ENCODE measurements at regions of chr2 and their contacts with region 1.

Region 1: GRCh38 chr2:27890146-27890923 is at the starts of genes BABAM2 and RBKS:
- DNase-seq: peak; percentile 97
- H3K4me3 Mint-ChIP-seq: peak within 1 kb of the TSS; percentile 100
- H3K27ac Mint-ChIP-seq: peak within 1 kb of the TSS; percentile 100
- H3K4me1 Mint-ChIP-seq: peaks cover 57% of the 10 kb centered on the region
- H3K27me3 Mint-ChIP-seq: peaks cover 2% of the 10 kb centered on the region
- total RNA-seq, gene BABAM2: 45.9 and 46.7 TPM in 2 replicates
- total RNA-seq, gene RBKS: 1.3 and 1.4 TPM in 2 replicates

Region 2: DNA sequence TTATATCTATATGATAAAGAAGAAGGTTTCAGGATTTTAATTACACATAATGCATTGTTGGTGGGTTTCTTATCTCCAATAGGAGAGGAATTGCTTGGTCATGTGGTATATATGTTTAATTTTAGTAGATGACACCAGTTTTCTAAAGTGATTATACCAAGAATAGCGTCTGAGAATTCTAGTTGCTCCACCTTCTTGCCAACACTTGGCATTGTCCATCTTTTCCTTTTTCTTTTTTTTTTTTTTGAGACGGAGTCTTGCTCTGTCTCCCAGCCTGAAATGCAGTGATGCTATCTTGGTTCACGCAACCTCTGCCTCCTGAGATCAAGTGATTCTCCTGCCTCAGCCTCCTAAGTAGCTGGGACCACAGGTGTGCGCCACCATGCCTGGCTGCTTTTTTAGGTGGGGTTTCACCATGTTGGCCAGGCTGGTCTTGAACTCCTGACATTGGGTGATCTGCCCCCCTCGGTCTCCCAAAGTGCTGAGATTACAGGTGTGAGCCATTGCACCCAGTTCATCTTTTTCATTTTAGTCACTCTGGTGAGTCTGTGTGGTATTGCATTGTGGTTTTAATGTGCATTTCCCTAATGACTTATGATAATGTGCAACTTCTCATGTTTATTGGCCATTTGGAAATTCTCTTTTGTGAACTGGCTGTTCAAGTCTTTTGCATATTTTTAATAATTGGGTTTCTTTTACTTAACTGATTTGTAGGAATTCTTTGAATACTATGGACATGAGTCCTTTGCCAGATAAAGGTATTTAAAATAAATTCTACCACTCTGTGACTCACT is 344.8 kb before region 1 on chr2:
- intact Hi-C with region 1: no loop called
- DNase-seq: no peak
- H3K4me3 Mint-ChIP-seq: no peak overlapping the region
- H3K27ac Mint-ChIP-seq: no peak overlapping the region
- H3K4me1 Mint-ChIP-seq: no peaks in the 10 kb centered on the region
- H3K27me3 Mint-ChIP-seq: no peaks in the 10 kb centered on the region

Region 3: DNA sequence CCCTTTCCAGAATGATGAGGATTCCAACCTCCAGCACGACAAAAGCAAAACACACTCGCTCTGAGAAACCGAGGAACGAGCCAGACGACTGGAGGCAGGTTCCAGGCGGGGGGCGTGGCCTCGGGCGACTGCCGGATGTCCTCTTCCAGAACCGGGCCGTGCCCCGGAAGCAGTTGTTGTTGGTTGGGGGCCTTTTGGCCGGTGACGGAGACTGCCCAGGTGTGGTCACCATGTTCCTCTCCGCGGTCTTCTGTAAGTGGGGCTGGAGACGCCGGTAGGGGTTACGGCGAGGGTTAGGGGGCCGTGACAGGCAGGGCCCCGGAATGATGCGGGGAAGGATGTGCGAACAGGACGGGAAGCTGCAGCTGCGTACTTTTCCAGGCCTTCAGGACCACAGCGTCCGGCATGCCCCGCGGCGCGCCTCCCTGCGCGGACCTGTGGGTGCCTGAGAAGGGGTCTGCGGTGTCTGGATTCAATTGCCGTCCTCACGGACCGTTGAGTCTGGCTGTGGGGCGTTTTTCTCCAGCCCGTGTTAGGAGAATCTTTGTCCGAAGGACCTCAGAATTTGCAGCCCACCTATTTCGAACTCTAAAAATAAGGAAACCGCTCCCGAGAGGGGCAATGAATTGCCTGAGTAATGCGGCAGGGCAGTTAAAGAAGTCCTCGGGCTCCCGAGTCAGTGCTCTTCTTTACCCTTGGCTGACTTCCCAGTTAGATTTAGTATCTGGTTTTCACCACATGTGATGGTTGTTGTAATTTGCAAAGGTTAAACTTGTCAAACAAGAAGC is 118.6 kb before region 1 on chr2 and contains the start of gene MRPL33:
- intact Hi-C with region 1: loop called (anchors 2 kb)
- DNase-seq: peak; percentile 97
- H3K4me3 Mint-ChIP-seq: peak within 1 kb of the TSS; percentile 98
- H3K27ac Mint-ChIP-seq: peak within 1 kb of the TSS; percentile 97
- H3K4me1 Mint-ChIP-seq: peaks cover 23% of the 10 kb centered on the region
- H3K27me3 Mint-ChIP-seq: no peaks in the 10 kb centered on the region
- total RNA-seq, gene MRPL33: 59.0 and 59.6 TPM in 2 replicates

Region 4: GRCh38 chr2:27844821-27845255 is 45.5 kb before region 1 on chr2:
- intact Hi-C with region 1: no loop called
- DNase-seq: no peak
- H3K4me3 Mint-ChIP-seq: no peak overlapping the region
- H3K27ac Mint-ChIP-seq: no peak overlapping the region
- H3K4me1 Mint-ChIP-seq: no peaks in the 10 kb centered on the region
- H3K27me3 Mint-ChIP-seq: no peaks in the 10 kb centered on the region

Region 5: GRCh38 chr2:27954771-27955383 is 64.5 kb after region 1 on chr2:
- intact Hi-C with region 1: loop called (anchors 2 kb)
- DNase-seq: peak; percentile 76
- H3K4me3 Mint-ChIP-seq: peak overlapping the region; percentile 66
- H3K27ac Mint-ChIP-seq: peak overlapping the region; percentile 86
- H3K4me1 Mint-ChIP-seq: peaks cover 67% of the 10 kb centered on the region
- H3K27me3 Mint-ChIP-seq: no peaks in the 10 kb centered on the region

Measured in activated CD4-positive, alpha-beta T cell treated with anti-CD3 and anti-CD28 coated beads, Interleukin-2, amount 10 ng/mL, durations not matched to agents 24 days and 14 days (primary cell).